Gastrocnemius medialis (tissue), 4 donors: ENCODE measurements at regions of chr12 and their contacts with region 1.

Region 1: DNA sequence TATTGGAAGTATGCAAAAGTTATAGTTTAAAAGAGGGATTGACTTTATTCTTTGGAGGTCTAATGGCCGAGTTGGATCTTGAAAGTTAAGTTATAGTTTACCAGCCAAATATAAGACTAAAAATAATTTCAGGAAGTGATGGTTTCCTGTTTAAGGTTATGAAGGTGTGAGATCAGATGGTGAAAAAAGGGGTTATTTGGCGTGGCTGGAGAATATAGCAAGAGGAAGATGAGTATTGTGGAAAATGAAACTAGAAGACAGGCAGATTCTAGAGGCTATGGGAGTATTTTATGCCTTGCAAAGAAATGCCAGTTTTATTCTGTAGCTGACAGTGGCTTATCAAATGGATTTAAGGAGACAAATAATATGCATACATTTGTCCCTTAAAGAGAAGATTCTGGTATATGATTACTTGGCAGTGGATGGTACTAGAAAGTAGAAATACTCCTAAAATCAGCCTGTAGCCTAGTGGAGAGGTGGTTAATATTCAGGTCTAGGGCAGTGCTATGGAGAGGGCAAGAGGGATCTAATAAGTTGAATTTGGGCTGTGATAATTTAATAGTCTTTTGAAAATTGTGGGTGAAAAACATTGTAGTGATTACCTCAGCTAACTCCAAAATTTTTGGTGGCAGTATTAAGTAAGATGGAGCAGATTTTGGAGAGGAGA is 1091.8 kb upstream of the ATXN7L3B start:
- DNase-seq: no peak
- ATAC-seq: no peak
- H3K4me3 ChIP-seq: no peak overlapping the region
- H3K27ac ChIP-seq: no peak overlapping the region
- H3K4me1 ChIP-seq: no peaks in the 10 kb centered on the region
- H3K27me3 ChIP-seq: no peaks in the 10 kb centered on the region
- CTCF ChIP-seq: no peak
- POLR2A ChIP-seq: no peak

Region 2: GRCh38 chr12:73341559-73342247 is 104.1 kb before region 1 on chr12:
- in situ Hi-C with region 1: loop called in 1 of 4 experiments (anchors 25 kb)
- intact Hi-C with region 1: no loop called
- DNase-seq: no peak
- ATAC-seq: no peak
- H3K4me3 ChIP-seq: no peak overlapping the region
- H3K27ac ChIP-seq: no peak overlapping the region
- H3K4me1 ChIP-seq: no peaks in the 10 kb centered on the region
- H3K27me3 ChIP-seq: no peaks in the 10 kb centered on the region
- CTCF ChIP-seq: no peak
- POLR2A ChIP-seq: no peak

Region 3: DNA sequence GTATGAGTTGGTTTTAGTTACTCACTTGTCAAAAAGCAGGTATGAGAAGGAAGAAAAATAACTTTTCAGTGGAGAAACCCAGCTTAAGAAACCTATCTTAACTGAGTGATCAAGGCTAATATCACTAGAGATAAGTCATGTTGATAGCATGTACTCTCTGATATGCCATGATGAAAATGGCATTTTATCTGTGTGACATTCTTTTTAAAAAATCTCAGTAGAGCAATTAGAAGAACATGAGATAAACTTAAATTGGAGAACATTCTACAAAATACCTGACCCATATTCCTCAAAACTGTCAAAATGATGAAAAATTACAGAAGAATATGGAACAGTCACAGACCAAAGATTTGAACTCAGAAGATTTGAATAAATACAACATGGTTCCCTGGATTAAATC is 179.4 kb after region 1 on chr12:
- in situ Hi-C with region 1: no loop called
- intact Hi-C with region 1: no loop called
- DNase-seq: no peak
- ATAC-seq: no peak
- H3K4me3 ChIP-seq: no peak overlapping the region
- H3K27ac ChIP-seq: no peak overlapping the region
- H3K4me1 ChIP-seq: no peaks in the 10 kb centered on the region
- H3K27me3 ChIP-seq: no peaks in the 10 kb centered on the region
- CTCF ChIP-seq: no peak
- POLR2A ChIP-seq: no peak